Activated T-helper 2 cell treated with anti-CD3 and anti-CD28 coated beads, Interferon-gamma antibody, Interleukin-2, Interleukin-4, amounts not matched to agents 10 μg/mL and 5 μg/mL and 100 μg/mL, durations not matched to agents 14 hours and 24 hours and 36 hours (primary cell): ENCODE measurements at regions of chr13 and their contacts with region 1.

Region 1: DNA sequence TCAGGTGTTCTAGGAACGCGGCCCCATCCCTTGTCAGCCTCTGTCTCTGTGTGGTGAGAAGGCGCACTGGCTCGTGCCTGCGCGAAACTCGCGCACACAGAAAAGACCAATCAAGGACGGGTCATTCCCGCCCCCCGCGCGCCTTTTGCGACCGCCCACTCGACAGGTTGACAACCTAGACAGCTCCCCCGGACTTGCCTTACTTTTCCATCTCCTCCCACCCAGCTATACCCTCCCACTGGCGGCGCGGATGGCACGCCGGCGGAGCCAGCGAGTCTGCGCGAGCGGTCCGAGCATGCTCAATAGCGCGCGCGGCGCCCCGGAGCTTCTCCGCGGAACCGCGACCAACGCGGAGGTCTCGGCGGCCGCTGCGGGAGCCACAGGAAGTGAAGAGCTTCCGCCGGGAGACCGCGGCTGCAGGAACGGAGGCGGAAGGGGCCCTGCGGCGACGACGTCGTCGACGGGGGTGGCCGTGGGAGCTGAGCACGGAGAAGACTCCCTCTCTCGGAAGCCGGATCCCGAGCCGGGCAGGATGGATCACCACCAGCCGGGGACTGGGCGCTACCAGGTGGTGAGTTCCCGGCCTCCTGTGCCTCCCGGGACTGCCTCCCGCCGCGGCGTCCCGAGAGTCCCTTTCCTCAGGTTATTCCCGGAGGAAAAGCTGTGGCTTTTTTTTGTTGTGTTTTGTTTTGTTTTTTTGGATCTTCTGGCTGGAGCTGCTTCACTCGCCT is at the start of gene NDFIP2:
- DNase-seq: peak; percentile 90
- H3K4me3 Mint-ChIP-seq: peak within 1 kb of the TSS; percentile 87
- H3K27ac Mint-ChIP-seq: peak within 1 kb of the TSS; percentile 93
- H3K4me1 Mint-ChIP-seq: peaks cover 58% of the 10 kb centered on the region
- H3K27me3 Mint-ChIP-seq: no peaks in the 10 kb centered on the region
- total RNA-seq, gene NDFIP2: 227 and 231 TPM in 2 replicates

Region 2: DNA sequence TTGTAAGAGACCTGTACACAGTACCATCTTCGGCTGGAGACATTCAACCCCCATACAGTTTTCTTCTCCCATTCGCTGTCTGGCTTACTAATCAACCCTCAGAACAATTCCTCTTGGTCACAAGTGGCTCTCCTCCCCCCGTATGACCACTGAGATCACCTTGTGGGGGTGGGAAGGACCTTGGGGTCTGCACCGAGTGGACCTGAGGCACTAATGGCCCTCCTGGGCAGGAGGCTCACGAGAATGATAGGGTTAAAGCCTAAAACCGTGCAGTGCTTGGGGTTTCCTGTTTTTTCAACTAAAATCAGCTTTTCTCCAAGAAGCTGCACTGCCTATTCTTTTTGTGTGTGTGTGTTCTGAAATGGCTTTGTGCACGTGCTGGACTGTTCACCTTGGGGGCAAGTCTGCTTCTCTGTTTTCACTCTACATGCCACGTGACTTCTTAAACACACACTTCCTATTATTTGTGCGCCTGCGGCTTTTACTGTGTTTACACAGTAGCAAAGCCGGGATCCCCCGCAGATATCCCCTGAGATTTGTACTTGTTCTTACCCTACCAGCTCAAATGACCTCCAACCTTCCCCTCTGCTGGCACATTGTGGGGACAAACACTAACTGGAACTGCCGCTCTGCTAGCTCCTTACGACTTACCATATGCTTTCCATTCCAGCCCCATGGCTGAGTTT is 87.4 kb before region 1 on chr13:
- intact Hi-C with region 1: loop called (anchors 2 kb)
- DNase-seq: peak; percentile 32
- H3K4me3 Mint-ChIP-seq: peak overlapping the region; percentile 70
- H3K27ac Mint-ChIP-seq: peak overlapping the region; percentile 74
- H3K4me1 Mint-ChIP-seq: peaks cover 53% of the 10 kb centered on the region
- H3K27me3 Mint-ChIP-seq: no peaks in the 10 kb centered on the region

Region 3: GRCh38 chr13:79423801-79424642 is 57.1 kb before region 1 on chr13:
- intact Hi-C with region 1: loop called (anchors 1 kb)
- DNase-seq: no peak
- H3K4me3 Mint-ChIP-seq: no peak overlapping the region
- H3K27ac Mint-ChIP-seq: no peak overlapping the region
- H3K4me1 Mint-ChIP-seq: peaks cover 26% of the 10 kb centered on the region
- H3K27me3 Mint-ChIP-seq: no peaks in the 10 kb centered on the region

Region 4: DNA sequence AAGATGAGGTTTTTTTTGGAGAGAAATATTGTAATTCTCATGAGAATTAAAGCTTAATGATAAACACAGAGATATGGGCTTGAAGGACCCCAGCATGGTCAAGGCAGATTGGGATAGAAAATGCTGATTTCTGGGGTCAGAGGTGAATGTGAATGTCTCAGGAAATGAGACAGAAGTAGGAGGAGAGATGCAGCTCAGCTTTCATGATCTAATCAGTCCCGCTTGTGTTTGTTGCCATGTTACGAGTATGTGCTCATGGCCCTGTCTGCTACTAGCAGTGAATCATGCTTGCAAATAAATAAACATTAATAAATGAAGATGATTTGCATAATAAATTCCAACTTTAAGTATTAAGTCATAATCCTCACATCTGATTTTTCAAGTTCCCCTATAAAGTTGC is 23.2 kb before region 1 on chr13:
- intact Hi-C with region 1: loop called (anchors 1 kb)
- DNase-seq: no peak
- H3K4me3 Mint-ChIP-seq: no peak overlapping the region
- H3K27ac Mint-ChIP-seq: peak overlapping the region; percentile 77
- H3K4me1 Mint-ChIP-seq: peaks cover 66% of the 10 kb centered on the region
- H3K27me3 Mint-ChIP-seq: no peaks in the 10 kb centered on the region

Region 5: GRCh38 chr13:79491715-79492114 is 10.6 kb after region 1 on chr13:
- intact Hi-C with region 1: loop called (anchors 1 kb)
- DNase-seq: no peak
- H3K4me3 Mint-ChIP-seq: peak overlapping the region; percentile 78
- H3K27ac Mint-ChIP-seq: peak overlapping the region; percentile 95
- H3K4me1 Mint-ChIP-seq: peaks cover 87% of the 10 kb centered on the region
- H3K27me3 Mint-ChIP-seq: no peaks in the 10 kb centered on the region

Region 6: DNA sequence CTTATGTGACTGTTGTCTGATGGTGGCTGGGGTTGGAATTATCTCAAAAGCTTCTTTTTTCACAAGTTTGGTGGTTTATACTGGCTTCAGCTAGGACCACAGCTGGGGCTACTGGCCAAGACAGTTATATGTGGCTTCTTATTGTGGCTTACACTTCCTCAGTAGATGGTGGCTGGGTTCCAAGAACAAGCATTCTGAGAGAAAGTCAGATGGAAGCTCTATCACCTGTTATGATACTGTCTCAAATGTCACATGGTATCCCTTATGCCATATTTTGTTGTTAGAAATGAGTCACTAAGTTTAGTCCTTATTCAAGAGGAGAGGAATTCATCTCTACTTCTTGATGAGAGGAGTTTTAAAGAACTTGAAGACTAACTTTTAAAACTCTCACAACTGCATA is 41.5 kb after region 1 on chr13:
- intact Hi-C with region 1: loop called (anchors 1 kb)
- DNase-seq: peak; percentile 58
- H3K4me3 Mint-ChIP-seq: peak overlapping the region; percentile 57
- H3K27ac Mint-ChIP-seq: peak overlapping the region; percentile 89
- H3K4me1 Mint-ChIP-seq: peaks cover 39% of the 10 kb centered on the region
- H3K27me3 Mint-ChIP-seq: no peaks in the 10 kb centered on the region